Activated naive CD4-positive, alpha-beta T cell treated with anti-CD3 and anti-CD28 coated beads for 36 hours (primary cell): ENCODE measurements at regions of chr17 and their contacts with region 1.

Region 1: GRCh38 chr17:49748791-49749190 is 15.1 kb downstream of the FAM117A start:
- DNase-seq: peak; percentile 86
- H3K4me3 Mint-ChIP-seq: peak overlapping the region; percentile 14
- H3K27ac Mint-ChIP-seq: peak overlapping the region; percentile 91
- H3K4me1 Mint-ChIP-seq: peaks cover 78% of the 10 kb centered on the region
- H3K27me3 Mint-ChIP-seq: no peaks in the 10 kb centered on the region

Region 2: DNA sequence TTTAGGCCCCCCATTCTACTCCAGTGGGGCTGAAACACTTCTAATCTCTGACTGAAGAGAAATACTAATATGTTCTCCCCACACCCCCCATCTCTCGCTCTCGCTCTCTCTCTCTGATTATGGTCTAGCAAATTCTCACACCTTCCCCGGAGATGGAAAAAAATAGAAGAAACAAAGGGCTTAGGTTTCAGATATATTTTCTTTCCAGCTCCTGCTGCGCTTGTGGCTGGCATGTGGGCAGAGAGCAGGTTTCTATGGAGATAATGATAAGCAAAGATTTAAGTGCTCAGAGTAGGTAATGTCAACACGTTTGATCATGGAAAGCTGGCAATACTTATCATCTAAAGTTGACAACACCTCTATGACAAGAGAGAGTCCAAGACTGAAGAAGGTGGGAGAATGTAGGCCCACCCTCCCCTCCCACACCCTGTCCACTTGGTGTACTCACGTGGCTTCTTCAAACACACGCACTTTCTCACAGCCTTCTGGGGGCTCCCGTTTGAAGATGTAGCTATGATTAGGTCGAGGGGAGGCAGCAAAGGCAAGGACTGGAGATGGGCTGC is 33.0 kb before region 1 on chr17:
- CTCF ChIA-PET with region 1: interaction called, 13 read pairs
- intact Hi-C with region 1: loop called (anchors 1 kb)
- DNase-seq: peak; percentile 46
- H3K4me3 Mint-ChIP-seq: no peak overlapping the region
- H3K27ac Mint-ChIP-seq: peak overlapping the region; percentile 77
- H3K4me1 Mint-ChIP-seq: peaks cover 37% of the 10 kb centered on the region
- H3K27me3 Mint-ChIP-seq: no peaks in the 10 kb centered on the region

Region 3: GRCh38 chr17:49935526-49936210 is 186.9 kb after region 1 on chr17:
- CTCF ChIA-PET with region 1: no interaction called
- intact Hi-C with region 1: no loop called
- DNase-seq: no peak
- H3K4me3 Mint-ChIP-seq: no peak overlapping the region
- H3K27ac Mint-ChIP-seq: no peak overlapping the region
- H3K4me1 Mint-ChIP-seq: no peaks in the 10 kb centered on the region
- H3K27me3 Mint-ChIP-seq: peaks cover 13% of the 10 kb centered on the region

Region 4: GRCh38 chr17:50560185-50560824 is 811.5 kb after region 1 on chr17 and contains the start of gene CACNA1G:
- CTCF ChIA-PET with region 1: no interaction called
- intact Hi-C with region 1: no loop called
- DNase-seq: peak; percentile 89
- H3K4me3 Mint-ChIP-seq: peak within 1 kb of the TSS; percentile 66
- H3K27ac Mint-ChIP-seq: no peak within 1 kb of the TSS
- H3K4me1 Mint-ChIP-seq: peaks cover 27% of the 10 kb centered on the region
- H3K27me3 Mint-ChIP-seq: peaks cover 48% of the 10 kb centered on the region
- total RNA-seq, gene CACNA1G: 0.22 to 0.24 TPM